ENCODE measurements at regions of chr1 and their contacts with region 1.

Region 1: DNA sequence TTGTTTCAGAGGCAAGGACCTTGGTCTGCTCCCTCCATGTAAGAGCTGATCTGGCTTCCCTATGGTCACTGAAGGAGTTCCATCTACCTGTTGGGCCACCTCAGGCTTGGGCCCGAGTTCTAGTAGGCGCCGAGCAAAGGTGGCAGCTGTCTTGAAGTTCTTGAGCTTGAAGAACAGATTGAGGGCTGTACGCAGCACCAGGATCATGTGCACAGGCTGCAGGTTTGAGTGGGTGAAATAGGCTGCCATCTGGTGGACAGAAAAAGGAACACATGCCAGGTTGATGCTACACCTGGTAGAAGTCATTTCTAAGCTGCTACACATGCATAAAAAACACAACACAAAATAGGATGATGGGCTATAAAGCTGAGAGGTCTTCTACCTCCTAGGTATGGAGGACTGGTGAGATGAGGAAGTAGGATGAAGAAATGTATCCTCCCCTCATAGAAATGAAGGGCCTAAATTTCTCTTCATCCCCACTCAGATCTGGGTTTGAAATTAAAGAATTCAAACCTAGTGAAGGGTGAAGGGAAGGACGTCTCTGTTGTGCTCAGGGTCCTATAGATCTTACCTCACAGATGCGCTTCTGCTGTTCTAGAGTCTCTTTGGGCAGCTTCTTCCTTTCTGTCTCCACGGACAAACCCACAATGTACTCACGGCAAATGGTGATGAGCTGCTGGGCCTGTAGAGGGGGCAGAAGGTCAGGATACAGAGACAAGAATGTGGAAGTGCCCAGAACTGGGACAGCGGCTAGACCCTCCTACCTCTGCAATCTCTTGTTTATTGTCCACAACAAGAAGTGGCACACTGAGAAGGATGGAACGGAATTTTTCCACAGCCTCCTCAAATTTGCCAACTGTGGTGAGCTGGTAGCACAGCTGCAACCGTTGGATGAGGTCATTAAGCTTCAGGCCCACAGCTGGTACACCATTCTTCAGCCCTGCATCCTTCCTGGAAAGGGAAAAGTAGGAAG is 6.6 kb upstream of the PEX19 start:
- DNase-seq: peak; percentile 54
- H3K4me3 ChIP-seq: no peak overlapping the region
- CTCF ChIP-seq: peak; percentile 82

Region 2: GRCh38 chr1:160101037-160101716 is 190.4 kb before region 1 on chr1:
- in situ Hi-C with region 1: loop called (anchors 10 kb)
- DNase-seq: no peak
- H3K4me3 ChIP-seq: no peak overlapping the region
- CTCF ChIP-seq: peak; percentile 98

Region 3: GRCh38 chr1:160193091-160193819 is 98.3 kb before region 1 on chr1:
- in situ Hi-C with region 1: loop called (anchors 5 kb)
- DNase-seq: peak; percentile 79
- H3K4me3 ChIP-seq: no peak overlapping the region
- CTCF ChIP-seq: peak; percentile 90

Region 4: DNA sequence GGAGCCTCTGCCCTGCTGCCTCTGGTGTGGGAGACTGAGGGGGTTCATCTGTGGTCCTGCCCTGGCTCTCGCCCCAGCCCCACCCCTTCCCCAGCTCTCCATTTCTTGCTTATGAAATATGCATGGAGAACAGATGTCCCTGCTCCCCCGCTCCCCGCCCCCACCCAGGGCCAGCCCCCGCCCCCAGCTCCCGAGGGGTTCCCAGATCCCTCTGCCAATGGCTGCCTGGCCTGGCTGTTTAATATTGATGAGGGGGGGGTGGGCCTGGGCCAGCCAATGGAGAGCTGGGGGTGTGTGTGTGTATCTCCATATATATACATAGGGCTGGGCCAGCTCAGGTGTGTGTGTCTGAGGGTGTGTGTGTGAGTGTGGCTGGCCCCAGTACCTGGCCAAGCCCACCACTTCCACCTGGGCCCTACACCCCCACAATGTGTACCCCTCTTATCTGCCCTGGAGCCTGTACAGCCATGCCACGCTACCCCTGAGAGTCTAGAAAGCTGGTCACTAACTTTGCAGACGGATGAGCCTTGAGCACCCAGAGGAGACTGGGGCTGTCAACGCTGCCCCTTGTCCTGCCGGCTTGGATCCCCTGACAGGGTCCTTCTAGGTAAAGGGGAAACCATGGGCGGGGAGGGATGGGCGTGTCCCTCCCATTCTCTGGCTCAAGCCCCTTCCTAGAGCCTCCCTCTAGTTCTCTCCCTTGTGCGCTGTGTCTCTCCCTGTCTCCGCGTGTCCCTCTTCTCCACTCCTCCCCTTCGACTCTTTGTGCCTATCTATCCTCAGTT is 75.4 kb after region 1 on chr1 and contains the start of gene NHLH1:
- in situ Hi-C with region 1: no loop called
- DNase-seq: no peak
- H3K4me3 ChIP-seq: no peak within 1 kb of the TSS
- CTCF ChIP-seq: no peak